ENCODE measurements at regions of chr20 and their contacts with region 1.

Region 1: GRCh38 chr20:49338061-49338460 is 60.2 kb upstream of the ZNFX1 start:
- DNase-seq: no peak
- H3K27ac ChIP-seq: no peak overlapping the region
- CTCF ChIP-seq: no peak

Region 2: DNA sequence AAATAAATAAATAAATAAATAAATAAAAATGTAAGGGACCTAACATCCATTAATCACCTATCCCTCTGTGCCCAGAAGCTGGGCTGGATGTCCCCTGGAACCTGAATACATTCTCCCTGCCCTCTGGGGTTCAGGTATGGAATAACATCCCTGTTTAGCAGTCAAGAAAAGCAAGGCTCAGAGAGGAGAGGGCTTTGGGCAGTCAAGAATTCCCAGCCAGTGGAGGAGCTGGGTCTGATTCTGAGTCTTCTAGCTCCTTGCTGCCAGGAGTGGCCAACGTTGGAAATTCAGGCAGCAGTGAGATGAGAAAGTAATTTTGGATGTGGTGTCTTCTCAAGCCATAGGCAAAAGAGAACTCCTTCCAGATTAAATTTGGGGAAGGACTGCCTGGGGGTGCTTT is 17.6 kb before region 1 on chr20:
- CTCF ChIA-PET with region 1: interaction called, 10 read pairs
- POLR2A ChIA-PET with region 1: no interaction called
- DNase-seq: peak; percentile 65
- H3K27ac ChIP-seq: no peak overlapping the region
- CTCF ChIP-seq: 0 out of 2 replicates have a peak, but pooled peaks have one; percentile 31

Region 3: DNA sequence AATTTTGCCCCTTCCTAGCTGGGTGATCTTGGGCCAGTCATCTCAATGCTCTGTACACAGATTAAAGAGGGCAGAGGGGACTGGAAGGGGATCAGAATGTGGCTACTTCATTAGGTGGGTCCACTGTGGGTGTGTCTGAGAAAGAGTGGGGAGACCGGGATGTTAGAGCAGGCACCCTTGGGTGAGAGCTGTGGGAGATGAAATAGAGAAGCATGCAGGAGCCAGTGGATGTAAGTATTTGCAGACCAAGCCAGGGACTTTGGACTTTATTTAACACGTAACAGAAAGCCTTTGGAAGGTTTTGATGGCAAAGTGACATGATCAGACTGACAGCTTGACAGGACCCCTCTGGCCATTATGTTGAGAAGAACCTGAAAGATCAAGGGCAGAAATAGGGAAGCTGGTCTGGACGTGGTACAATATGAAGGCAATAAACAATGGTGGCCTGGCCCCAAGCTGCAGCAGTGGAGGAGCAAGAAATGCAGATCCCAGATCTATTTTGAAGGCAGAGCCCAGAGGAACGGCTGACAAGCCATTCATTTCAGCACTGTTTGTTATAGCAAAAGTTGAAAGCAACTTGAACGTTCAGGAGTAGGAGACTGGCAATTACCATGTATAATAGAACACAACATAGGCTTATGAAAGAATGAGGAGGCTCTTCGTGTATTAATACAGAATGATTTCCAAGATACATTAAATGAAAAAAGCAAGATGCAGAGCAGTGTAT is 22.3 kb after region 1 on chr20:
- CTCF ChIA-PET with region 1: no interaction called
- POLR2A ChIA-PET with region 1: no interaction called
- DNase-seq: no peak
- H3K27ac ChIP-seq: no peak overlapping the region
- CTCF ChIP-seq: no peak

Region 4: DNA sequence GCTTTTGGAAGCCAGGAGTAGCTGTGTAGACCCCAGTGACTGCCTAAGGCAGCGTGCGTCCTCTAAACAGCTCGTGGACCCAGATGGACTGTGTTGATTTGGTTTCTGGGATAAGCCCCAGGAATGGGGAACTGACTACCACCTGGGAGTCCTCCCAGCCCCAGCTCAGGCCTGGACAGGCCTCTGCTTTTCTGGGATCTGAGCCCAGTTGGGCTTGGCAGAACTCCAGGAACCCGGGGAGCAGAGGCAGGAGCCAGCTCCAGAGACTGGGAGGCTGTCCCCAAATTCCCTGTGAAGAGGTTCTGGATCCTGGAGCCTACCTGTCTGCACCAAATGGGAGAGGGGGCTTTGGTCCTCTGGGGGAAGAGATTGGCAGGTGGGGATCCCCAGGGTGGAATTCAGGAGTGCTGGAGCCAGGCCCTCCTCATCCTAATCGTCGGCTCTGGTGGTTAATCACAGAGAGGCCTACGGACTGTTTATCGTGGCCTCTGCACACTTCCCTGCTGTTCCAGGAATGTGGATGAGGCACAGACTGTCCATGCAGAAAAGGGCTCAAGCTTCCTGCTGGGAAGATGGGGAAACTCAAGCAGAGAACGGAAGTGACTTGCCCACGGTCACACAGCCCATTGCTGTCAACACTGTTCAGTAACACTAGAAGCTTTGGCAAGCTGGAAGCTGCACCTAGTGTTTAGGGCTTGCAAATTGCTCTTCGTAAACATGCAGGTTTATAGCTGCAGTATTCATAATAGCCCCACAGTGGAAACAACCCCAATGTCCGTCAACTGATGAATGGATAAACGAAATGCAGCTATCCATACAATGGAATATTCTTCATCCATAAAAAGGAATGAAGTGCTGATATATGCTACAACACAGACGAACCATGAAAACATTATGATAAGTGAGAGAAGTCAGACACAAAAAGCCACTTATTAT is 43.8 kb after region 1 on chr20:
- CTCF ChIA-PET with region 1: no interaction called
- POLR2A ChIA-PET with region 1: no interaction called
- DNase-seq: peak; percentile 98
- H3K27ac ChIP-seq: peak overlapping the region; percentile 92
- CTCF ChIP-seq: no peak

Region 5: GRCh38 chr20:49508435-49509199 is 170.6 kb after region 1 on chr20:
- CTCF ChIA-PET with region 1: interaction called, 47 read pairs
- POLR2A ChIA-PET with region 1: no interaction called
- DNase-seq: peak; percentile 63
- H3K27ac ChIP-seq: peak overlapping the region; percentile 66
- CTCF ChIP-seq: no peak; the same call in 1 of the 2 replicates

Region 6: GRCh38 chr20:49534255-49534712 is 196.2 kb after region 1 on chr20:
- CTCF ChIA-PET with region 1: interaction called, 18 read pairs
- POLR2A ChIA-PET with region 1: no interaction called
- DNase-seq: peak; percentile 91
- H3K27ac ChIP-seq: no peak overlapping the region
- CTCF ChIP-seq: peak; percentile 98

Measured in RWPE1 (cell line).